Activated B cell treated with CpG ODN at 0.5 μM for 24 hours (primary cell): ENCODE measurements at regions of chr20 and their contacts with region 1.

Region 1: DNA sequence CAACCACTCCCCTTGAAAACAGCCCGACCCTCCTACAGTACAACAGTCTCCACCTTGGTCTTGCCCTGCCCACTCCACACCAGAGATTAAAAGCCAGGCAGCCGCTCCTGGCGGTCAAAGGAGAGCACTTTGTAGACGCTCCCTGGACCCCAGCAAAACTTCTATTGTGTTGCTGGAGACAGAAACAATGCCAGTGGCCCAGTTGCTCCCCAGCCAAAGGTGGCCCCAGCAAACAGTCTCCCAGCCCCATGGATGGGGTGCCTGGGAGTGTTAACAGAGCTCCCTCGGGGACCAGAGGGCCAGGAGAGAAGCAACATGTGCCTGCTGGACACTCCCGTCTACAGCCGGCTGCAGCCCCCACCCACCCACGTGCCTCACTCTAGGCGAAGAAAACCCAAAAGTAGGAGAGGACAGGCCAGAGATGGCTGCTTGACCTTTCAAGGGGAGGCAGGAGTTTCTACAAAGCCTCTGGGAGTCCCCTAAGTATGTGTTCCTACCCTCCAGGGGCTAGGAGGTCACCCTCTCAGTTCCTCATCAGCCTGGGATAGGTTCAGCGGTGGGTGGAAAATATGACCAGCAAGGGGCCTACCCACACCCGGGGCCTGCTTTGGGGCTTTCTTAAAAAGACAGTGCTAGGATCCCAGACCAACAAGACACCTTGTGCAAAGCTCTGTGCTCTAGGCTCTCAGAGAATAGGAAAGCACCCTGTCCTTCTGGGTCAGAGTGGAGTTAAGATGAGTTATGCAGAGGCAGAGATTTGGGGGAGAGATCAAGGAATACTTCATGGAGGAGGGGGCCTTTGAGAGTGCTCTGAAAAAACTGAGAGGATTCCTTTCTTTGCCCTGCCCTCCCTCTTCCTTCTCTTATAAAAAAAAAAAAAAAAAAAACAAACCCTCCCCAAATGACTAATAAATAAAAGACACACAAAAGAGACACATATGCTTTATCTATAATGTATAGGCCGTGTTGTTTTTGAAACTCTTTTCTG is 19.0 kb upstream of the PREX1 start:
- DNase-seq: peak; percentile 61
- ATAC-seq: peak; percentile 97
- H3K4me3 Mint-ChIP-seq: peak overlapping the region; percentile 39
- H3K27ac Mint-ChIP-seq: peak overlapping the region; percentile 80
- H3K4me1 Mint-ChIP-seq: peaks cover 50% of the 10 kb centered on the region
- H3K27me3 Mint-ChIP-seq: no peaks in the 10 kb centered on the region
- CTCF ChIP-seq: no peak

Region 2: DNA sequence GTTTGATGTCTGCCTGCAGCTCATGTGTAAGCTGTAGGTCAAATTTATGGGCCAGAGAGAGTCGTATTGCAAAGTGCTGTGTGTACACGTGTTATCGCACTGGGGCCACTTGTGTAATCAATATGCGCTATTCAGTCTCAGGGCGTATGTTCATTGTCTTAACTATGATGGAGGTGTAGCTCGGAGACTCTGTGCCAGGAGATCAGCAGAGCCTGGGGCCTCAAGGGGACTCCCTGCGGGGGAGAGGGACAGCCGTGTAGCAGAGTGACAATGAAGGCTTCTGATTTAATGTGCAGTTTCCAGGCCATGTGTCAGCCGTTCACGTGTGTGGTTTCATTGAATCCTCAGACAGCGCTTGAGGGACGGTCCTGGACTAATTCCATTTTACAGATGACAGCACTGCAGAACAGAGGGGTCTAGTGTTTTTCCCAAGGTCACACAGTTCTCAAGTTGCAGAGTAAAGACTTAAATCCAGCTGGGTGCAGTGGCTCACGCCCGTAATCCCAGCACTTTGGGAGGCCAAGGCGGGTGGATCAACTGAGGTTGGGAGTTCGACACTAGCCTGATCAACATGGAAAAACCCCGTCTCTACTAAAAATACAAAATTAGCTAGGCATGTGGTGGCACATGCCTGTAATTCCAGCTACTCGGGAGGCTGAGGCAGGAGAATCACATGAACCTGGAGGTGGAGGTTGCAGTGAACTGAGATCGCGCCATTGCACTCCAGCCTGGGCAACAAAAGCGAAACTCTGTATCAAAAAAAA is 261.6 kb before region 1 on chr20:
- CTCF ChIA-PET with region 1: no interaction called
- POLR2A ChIA-PET with region 1: no interaction called
- intact Hi-C with region 1: no loop called
- DNase-seq: no peak
- ATAC-seq: no peak
- H3K4me3 Mint-ChIP-seq: no peak overlapping the region
- H3K27ac Mint-ChIP-seq: no peak overlapping the region
- H3K4me1 Mint-ChIP-seq: no peaks in the 10 kb centered on the region
- H3K27me3 Mint-ChIP-seq: peaks cover 25% of the 10 kb centered on the region
- CTCF ChIP-seq: no peak

Region 3: GRCh38 chr20:48875911-48876640 is 29.3 kb after region 1 on chr20:
- CTCF ChIA-PET with region 1: interaction called, 3 read pairs
- POLR2A ChIA-PET with region 1: interaction called, 3 read pairs
- intact Hi-C with region 1: loop called (anchors 2 kb)
- DNase-seq: peak; percentile 25
- ATAC-seq: peak; percentile 84
- H3K4me3 Mint-ChIP-seq: no peak overlapping the region
- H3K27ac Mint-ChIP-seq: peak overlapping the region; percentile 36
- H3K4me1 Mint-ChIP-seq: peaks cover 44% of the 10 kb centered on the region
- H3K27me3 Mint-ChIP-seq: no peaks in the 10 kb centered on the region
- CTCF ChIP-seq: no peak

Region 4: GRCh38 chr20:48904365-48905296 is 57.8 kb after region 1 on chr20:
- CTCF ChIA-PET with region 1: interaction called, 3 read pairs
- POLR2A ChIA-PET with region 1: interaction called, 3 read pairs
- intact Hi-C with region 1: loop called (anchors 2 kb)
- DNase-seq: no peak
- ATAC-seq: peak; percentile 83
- H3K4me3 Mint-ChIP-seq: peak overlapping the region; percentile 45
- H3K27ac Mint-ChIP-seq: peak overlapping the region; percentile 30
- H3K4me1 Mint-ChIP-seq: peaks cover 10% of the 10 kb centered on the region
- H3K27me3 Mint-ChIP-seq: no peaks in the 10 kb centered on the region
- CTCF ChIP-seq: no peak

Region 5: GRCh38 chr20:48912065-48912762 is 65.4 kb after region 1 on chr20:
- CTCF ChIA-PET with region 1: no interaction called
- POLR2A ChIA-PET with region 1: interaction called, 3 read pairs
- intact Hi-C with region 1: loop called (anchors 2 kb)
- DNase-seq: peak; percentile 55
- ATAC-seq: peak; percentile 97
- H3K4me3 Mint-ChIP-seq: peak overlapping the region; percentile 32
- H3K27ac Mint-ChIP-seq: peak overlapping the region; percentile 84
- H3K4me1 Mint-ChIP-seq: peaks cover 37% of the 10 kb centered on the region
- H3K27me3 Mint-ChIP-seq: no peaks in the 10 kb centered on the region
- CTCF ChIP-seq: no peak

Region 6: DNA sequence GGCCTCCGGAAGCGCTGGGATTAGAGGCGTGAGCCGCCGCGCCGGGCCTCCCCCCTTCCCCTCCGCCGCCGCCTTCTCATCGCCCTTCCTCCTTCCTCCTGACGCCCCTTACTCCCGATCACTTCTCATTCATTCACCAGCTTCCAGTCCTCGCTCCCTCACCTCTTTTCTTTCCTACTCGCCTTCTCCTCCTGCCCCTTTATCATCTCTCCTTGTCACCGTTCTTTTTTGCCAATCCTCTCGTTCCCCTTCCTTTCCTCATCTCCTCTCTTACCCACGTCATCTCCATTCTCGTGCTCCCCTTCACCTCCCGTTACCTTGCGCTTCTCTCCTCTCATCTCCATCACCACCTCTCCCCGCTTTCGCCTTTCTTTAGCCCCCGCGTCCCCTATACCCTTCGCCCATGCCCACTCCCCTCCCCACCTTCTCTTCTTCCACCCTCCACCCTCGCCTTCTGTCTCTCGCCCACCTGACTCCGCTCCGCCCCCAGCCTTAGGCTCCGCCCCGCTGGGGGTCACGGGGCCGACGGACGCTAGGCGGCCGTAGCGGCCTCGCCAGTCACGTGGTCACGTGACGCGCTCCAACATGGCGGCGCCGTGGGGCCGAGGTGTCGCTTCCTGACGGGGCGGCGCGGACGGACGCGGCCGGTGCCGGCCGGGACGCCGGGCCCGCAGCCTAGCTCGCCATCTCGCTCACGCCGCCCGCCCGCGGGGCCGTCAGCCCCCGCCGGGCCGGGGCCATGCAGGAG is 74.5 kb after region 1 on chr20 and contains the start of gene ARFGEF2:
- CTCF ChIA-PET with region 1: no interaction called
- POLR2A ChIA-PET with region 1: interaction called, 3 read pairs
- intact Hi-C with region 1: loop called (anchors 1 kb)
- DNase-seq: peak; percentile 96
- ATAC-seq: peak; percentile 90
- H3K4me3 Mint-ChIP-seq: peak within 1 kb of the TSS; percentile 93
- H3K27ac Mint-ChIP-seq: peak within 1 kb of the TSS; percentile 95
- H3K4me1 Mint-ChIP-seq: peaks cover 58% of the 10 kb centered on the region
- H3K27me3 Mint-ChIP-seq: no peaks in the 10 kb centered on the region
- CTCF ChIP-seq: no peak
- total RNA-seq, gene ARFGEF2: 30.8 and 39.0 TPM in 2 replicates

Region 7: GRCh38 chr20:49140834-49141233 is 294.0 kb after region 1 on chr20:
- CTCF ChIA-PET with region 1: no interaction called
- POLR2A ChIA-PET with region 1: no interaction called
- intact Hi-C with region 1: no loop called
- DNase-seq: no peak
- ATAC-seq: no peak
- H3K4me3 Mint-ChIP-seq: no peak overlapping the region
- H3K27ac Mint-ChIP-seq: no peak overlapping the region
- H3K4me1 Mint-ChIP-seq: peaks cover 9% of the 10 kb centered on the region
- H3K27me3 Mint-ChIP-seq: no peaks in the 10 kb centered on the region
- CTCF ChIP-seq: no peak